Endothelial cell of umbilical vein (primary cell): ENCODE measurements at regions of chr10 and their contacts with region 1.

Region 1: DNA sequence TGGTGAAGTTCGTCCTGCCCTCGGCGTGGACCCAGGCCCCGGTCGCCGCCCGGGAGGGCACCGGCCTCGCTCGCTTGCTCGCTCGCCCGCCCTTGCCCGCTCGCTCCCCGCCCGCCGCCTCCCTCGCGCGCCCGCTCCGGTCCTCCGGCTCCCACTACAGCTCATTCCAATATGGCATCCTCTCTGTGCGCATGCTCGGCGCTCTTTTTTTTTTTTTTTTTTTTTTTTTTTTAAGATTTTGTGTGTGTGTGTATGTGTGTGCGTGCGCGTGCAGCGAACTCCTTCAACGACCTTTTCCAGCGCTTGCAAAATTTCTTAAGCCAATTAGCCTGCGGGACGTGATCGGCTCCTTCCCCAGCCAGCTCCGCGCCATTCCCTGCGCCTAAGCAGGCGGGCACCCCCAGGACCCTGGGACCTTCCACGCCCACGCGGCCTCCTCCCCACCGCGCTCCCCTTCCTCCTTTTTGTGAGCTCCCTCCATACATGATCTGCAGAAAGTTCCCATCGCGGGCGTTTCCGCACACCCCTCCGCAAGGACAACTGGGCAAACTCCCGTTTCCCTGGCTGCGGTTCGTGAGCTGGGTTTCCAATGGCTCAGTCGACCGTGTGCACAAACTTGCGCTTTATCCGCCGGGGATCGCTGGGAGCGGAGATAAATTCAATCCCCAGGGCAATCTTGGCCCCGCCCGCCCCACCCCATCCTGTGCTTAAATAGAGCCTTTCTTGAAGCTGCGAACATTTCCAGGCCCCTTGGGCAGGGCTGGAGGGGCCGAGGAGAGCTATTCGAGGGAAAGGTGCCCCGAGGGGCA is at the start of gene SFMBT2:
- DNase-seq: peak; percentile 65
- H3K4me3 ChIP-seq: peak within 1 kb of the TSS; percentile 23 to 51 (median 30)
- H3K27ac ChIP-seq: no peak within 1 kb of the TSS
- H3K4me1 ChIP-seq: peaks cover 26% of the 10 kb centered on the region
- H3K27me3 ChIP-seq: peaks cover 55 to 76% of the 10 kb centered on the region in 2 experiments
- CTCF ChIP-seq: no peak
- POLR2A ChIP-seq: no peak
- total RNA-seq, gene SFMBT2: 0.44 and 0.64 TPM in 2 replicates

Region 2: DNA sequence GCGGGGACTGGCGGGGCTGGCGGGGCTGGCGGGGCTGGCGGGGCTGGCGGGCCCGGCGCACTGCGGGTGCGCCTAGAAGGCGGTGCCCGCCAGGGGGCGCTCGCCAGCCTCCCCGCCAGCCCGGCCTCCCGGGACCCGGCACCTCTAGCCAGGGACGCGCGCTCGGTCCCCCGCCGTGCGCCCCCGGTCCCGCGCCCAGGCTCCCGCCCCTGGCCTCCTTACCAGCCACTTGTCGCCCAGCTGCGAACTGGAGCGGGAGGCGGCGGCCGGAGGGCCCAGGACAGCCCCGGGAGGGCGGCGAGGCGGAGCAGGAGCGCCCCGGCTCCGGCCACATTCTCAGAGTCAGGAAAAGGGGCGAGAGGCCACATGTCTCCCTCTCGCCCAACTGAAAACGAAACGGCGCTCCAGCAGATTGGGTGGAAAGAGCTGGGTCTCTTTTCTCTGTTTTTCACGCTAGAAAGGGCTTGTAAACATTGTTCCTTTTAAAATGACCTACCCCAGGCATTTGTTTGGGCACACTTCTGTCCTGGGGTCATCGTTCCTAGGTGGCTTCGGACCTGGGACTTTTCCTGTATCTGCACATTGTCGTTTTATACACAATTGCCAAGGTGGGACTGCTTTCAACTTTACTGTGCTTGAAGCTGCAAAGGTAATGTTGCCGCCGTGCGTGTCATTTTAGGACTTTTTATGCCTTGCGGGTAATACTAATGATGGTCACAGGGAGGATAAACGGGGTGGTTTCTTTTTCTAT is 830.6 kb before region 1 on chr10:
- CTCF ChIA-PET with region 1: interaction called, 3 read pairs
- POLR2A ChIA-PET with region 1: no interaction called
- dilution Hi-C with region 1: no loop called
- intact Hi-C with region 1: loop called (anchors 5 kb)
- DNase-seq: peak; percentile 68
- H3K4me3 ChIP-seq: peak overlapping the region; percentile 75 to 92 (median 92)
- H3K27ac ChIP-seq: peak overlapping the region; percentile 60
- H3K4me1 ChIP-seq: peaks cover 10% of the 10 kb centered on the region
- H3K27me3 ChIP-seq: peaks cover 14 to 30% of the 10 kb centered on the region in 2 experiments
- CTCF ChIP-seq: peak; percentile 58
- POLR2A ChIP-seq: peak; percentile 28

Region 3: GRCh38 chr10:6678211-6678803 is 732.8 kb before region 1 on chr10:
- CTCF ChIA-PET with region 1: interaction called, 10 read pairs
- POLR2A ChIA-PET with region 1: no interaction called
- dilution Hi-C with region 1: no loop called
- intact Hi-C with region 1: no loop called
- DNase-seq: peak; percentile 55
- H3K4me3 ChIP-seq: no peak overlapping the region
- H3K27ac ChIP-seq: no peak overlapping the region
- H3K4me1 ChIP-seq: no peaks in the 10 kb centered on the region
- H3K27me3 ChIP-seq: peaks cover 5 to 11% of the 10 kb centered on the region in 2 experiments
- CTCF ChIP-seq: peak; percentile 71 to 77
- POLR2A ChIP-seq: no peak

Region 4: DNA sequence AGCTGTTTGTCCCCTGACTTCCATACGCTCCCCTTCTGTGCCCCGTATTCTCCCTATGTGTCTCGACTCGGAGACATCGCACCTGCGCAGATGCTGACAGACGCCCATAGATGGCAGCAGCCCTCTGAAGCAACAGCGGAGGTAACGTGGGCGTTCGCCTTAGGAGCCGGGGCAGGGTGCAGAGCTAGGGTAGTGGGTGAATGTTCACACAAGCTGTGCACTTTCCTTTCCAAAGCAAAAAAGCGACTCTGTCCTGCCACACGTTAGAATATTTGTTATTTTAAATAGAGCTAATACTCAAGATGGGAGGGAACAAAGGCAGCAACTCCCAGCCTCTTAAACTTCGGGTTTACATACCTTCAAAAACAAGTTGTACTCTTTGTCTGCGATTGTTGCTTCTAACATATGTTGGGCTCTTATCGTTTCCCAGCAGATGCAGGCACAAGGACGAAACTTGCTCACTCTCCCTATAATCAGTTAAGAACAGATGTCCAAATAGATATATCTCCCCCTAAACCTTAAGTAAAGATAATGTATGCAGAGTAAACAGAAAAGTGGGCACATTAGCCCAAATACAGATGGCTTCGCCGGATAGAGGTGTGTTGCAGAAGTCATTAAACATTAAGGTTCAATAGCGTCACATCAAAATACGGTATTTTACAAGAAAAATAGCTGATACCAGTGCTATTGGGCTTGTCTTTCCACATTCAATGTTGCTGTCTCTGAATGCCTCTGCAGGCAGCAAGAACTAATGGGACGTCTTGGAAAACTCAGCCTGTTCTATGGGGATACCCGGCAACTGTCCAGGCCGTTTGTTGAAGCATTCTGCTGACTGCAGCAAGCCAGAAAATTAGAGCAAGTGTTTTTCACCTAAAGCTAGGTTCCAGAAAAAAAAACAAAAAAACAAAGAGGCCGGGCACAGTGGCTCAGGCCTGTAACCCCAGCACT is 490.7 kb before region 1 on chr10:
- CTCF ChIA-PET with region 1: interaction called, 4 read pairs
- POLR2A ChIA-PET with region 1: no interaction called
- dilution Hi-C with region 1: no loop called
- intact Hi-C with region 1: loop called (anchors 2 kb)
- DNase-seq: peak; percentile 48
- H3K4me3 ChIP-seq: no peak overlapping the region
- H3K27ac ChIP-seq: no peak overlapping the region
- H3K4me1 ChIP-seq: peaks cover 5% of the 10 kb centered on the region
- H3K27me3 ChIP-seq: no peaks in the 10 kb centered on the region
- CTCF ChIP-seq: peak; percentile 46 to 70
- POLR2A ChIP-seq: no peak

Region 5: GRCh38 chr10:6995831-6996230 is 415.2 kb before region 1 on chr10:
- CTCF ChIA-PET with region 1: no interaction called
- POLR2A ChIA-PET with region 1: no interaction called
- dilution Hi-C with region 1: no loop called
- intact Hi-C with region 1: no loop called
- DNase-seq: peak; percentile 2
- H3K4me3 ChIP-seq: no peak overlapping the region
- H3K27ac ChIP-seq: no peak overlapping the region
- H3K4me1 ChIP-seq: no peaks in the 10 kb centered on the region
- H3K27me3 ChIP-seq: no peaks in the 10 kb centered on the region
- CTCF ChIP-seq: no peak
- POLR2A ChIP-seq: no peak

Region 6: GRCh38 chr10:7121154-7121810 is 289.8 kb before region 1 on chr10:
- CTCF ChIA-PET with region 1: no interaction called
- POLR2A ChIA-PET with region 1: no interaction called
- dilution Hi-C with region 1: no loop called
- intact Hi-C with region 1: loop called (anchors 1 kb)
- DNase-seq: peak; percentile 25
- H3K4me3 ChIP-seq: no peak overlapping the region
- H3K27ac ChIP-seq: no peak overlapping the region
- H3K4me1 ChIP-seq: no peaks in the 10 kb centered on the region
- H3K27me3 ChIP-seq: no peaks in the 10 kb centered on the region
- CTCF ChIP-seq: peak; percentile 62 to 66
- POLR2A ChIP-seq: no peak

Region 7: GRCh38 chr10:7260412-7260900 is 150.6 kb before region 1 on chr10:
- CTCF ChIA-PET with region 1: no interaction called
- POLR2A ChIA-PET with region 1: no interaction called
- dilution Hi-C with region 1: no loop called
- intact Hi-C with region 1: loop called (anchors 1 kb)
- DNase-seq: peak; percentile 64
- H3K4me3 ChIP-seq: no peak overlapping the region
- H3K27ac ChIP-seq: no peak overlapping the region
- H3K4me1 ChIP-seq: peaks cover 10% of the 10 kb centered on the region
- H3K27me3 ChIP-seq: no peaks in the 10 kb centered on the region
- CTCF ChIP-seq: peak; percentile 46 to 57
- POLR2A ChIP-seq: no peak

Region 8: DNA sequence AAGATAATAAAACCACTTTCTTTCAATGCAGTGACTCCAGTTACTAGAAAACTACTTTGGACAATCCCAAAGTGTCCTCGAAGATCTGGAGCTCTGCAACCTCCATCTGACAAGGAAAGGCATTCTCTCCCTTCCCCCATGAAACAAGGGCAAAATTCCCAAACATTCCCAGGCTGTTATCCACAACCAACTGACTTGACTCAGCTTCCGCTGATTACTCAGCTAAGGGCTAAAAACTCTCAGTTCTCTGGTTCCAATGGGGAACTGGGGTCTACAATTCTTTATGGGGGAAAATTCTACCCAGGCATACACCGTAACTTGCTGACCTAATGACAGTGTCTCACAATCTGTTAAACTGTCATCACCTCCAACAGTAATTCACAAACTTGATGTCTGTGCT is 48.6 kb before region 1 on chr10:
- CTCF ChIA-PET with region 1: no interaction called
- POLR2A ChIA-PET with region 1: no interaction called
- dilution Hi-C with region 1: no loop called
- intact Hi-C with region 1: no loop called
- DNase-seq: no peak
- H3K4me3 ChIP-seq: no peak overlapping the region
- H3K27ac ChIP-seq: no peak overlapping the region
- H3K4me1 ChIP-seq: no peaks in the 10 kb centered on the region
- H3K27me3 ChIP-seq: no peaks in the 10 kb centered on the region
- CTCF ChIP-seq: no peak
- POLR2A ChIP-seq: no peak

Region 9: DNA sequence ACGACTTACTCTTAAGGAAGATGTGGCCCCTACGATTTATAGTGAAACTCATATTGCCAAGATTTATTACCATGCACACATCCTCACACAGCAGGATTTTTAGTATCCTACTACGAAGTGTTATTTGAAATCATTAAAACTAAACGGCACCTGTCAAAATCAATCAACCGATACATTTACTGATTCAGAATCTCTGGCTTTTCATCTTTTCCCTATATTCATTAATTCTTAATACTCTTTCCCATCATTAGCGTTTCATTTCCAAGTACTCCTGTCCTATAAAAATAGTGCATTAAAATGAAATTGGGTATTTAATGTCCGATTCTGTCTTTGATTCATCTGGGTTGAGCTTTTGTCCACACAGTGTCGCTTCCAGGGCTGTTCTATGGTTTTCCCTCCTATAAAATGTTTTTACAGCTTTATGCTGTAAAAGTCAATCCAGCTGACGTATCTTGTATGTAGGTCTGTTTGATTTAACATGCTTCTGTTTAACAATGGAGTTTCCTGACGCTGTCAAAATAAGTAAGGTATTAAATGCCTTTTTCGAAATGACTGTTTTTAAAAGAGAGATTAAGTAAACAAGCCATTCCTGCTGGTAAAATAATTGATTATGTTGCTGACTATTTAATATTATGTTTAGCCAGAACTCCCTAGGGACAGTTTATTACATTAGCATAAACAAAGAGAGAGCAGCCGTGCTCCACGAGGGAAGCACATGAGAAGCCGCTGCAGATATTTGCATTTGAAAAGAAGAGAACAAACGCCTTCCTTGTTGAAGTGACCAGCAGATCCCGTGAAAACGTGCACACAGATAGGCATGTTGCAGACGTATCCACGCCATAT is 22.0 kb after region 1 on chr10:
- CTCF ChIA-PET with region 1: no interaction called
- POLR2A ChIA-PET with region 1: no interaction called
- dilution Hi-C with region 1: no loop called
- intact Hi-C with region 1: no loop called
- DNase-seq: peak; percentile 13
- H3K4me3 ChIP-seq: no peak overlapping the region
- H3K27ac ChIP-seq: no peak overlapping the region
- H3K4me1 ChIP-seq: no peaks in the 10 kb centered on the region
- H3K27me3 ChIP-seq: no peaks in the 10 kb centered on the region
- CTCF ChIP-seq: no peak
- POLR2A ChIP-seq: no peak

Region 10: DNA sequence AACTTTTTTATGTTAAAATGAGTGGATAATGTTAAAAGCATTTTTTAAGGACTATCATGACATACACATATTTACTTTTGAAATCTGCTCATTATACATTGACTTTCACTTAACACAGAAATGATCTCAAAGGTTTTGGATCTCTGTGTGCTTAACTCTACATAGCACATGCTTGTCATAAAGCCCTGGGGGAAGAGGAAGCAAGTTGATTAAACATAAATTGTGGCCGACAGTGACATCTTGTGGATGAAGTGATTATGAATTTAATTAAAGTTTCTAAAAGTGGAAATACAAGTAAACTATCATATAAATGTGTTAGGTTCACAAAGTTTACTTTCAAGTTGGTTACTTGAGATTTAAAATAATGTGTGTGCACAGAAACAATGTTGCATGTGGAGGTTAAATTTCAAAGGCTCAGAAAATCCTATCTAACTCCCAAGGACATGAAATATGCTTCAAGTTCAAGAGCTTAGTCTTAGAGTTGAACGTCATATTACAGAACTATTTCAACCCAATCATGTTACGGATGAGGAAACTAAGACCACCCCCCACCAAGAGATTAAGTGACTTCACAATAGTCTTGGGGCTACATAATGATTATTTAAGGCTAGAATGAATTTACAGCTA is 1891.2 kb after region 1 on chr10:
- CTCF ChIA-PET with region 1: no interaction called
- POLR2A ChIA-PET with region 1: no interaction called
- dilution Hi-C with region 1: no loop called
- intact Hi-C with region 1: loop called (anchors 10 kb)
- DNase-seq: peak; percentile 79
- H3K4me3 ChIP-seq: no peak overlapping the region
- H3K27ac ChIP-seq: no peak overlapping the region
- H3K4me1 ChIP-seq: no peaks in the 10 kb centered on the region
- H3K27me3 ChIP-seq: peaks cover 0 to 2% of the 10 kb centered on the region in 2 experiments
- CTCF ChIP-seq: peak in 1 of 2 donors; percentile 8
- POLR2A ChIP-seq: no peak